Calu3 (cell line): ENCODE measurements at regions of chr3 and their contacts with region 1.

Region 1: DNA sequence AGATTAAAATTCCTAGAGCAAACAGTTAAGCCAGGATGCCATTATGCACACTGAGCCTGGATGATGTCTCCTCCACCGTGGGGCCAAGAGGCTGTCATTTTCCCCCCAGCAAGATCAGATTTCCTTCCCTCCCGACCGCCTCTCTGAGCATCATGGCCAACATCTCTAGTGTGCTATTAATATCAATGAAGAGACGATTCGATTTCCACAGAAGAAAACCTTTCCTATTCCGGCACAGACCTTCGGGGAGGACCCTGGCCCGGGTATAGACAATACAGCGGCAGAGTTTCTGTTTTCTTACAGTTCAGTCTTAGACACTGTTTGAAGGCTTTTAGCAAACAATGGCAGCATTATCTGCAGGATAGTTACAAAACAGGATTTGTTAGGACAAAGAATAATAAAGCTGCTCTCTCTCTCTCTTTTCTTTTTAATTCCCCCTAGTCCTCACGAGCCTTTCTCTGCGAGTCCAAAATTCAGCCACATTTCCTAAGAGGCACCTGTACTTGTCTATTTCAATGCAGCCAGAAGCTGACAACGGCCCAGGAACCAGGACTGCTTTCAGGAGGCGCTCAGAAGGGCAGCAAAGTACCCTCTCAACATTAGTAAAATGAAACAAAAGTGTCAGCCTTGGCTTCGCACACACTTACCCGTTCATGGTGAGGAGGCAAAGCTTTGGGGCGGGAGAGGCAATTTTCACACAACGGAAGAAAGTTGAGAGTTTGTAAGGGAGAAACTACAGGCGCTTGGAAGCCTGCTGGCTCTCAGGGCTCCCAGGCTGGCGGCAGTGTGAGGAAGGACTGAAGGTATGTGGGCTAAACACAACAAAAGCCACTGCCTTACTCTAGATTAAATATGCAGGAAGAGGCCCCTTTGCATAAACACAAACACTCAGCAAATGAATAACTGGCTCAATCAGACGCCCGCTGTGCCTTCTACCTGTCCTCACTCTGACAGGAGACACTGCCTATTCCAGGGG is 278.0 kb downstream of the FOXP1 start:
- DNase-seq: peak; percentile 12
- H3K4me3 Mint-ChIP-seq: peak overlapping the region; percentile 70
- H3K27ac Mint-ChIP-seq: peak overlapping the region; percentile 45
- H3K4me1 Mint-ChIP-seq: peaks cover 39% of the 10 kb centered on the region
- H3K27me3 Mint-ChIP-seq: no peaks in the 10 kb centered on the region
- CTCF ChIP-seq: no peak

Region 2: DNA sequence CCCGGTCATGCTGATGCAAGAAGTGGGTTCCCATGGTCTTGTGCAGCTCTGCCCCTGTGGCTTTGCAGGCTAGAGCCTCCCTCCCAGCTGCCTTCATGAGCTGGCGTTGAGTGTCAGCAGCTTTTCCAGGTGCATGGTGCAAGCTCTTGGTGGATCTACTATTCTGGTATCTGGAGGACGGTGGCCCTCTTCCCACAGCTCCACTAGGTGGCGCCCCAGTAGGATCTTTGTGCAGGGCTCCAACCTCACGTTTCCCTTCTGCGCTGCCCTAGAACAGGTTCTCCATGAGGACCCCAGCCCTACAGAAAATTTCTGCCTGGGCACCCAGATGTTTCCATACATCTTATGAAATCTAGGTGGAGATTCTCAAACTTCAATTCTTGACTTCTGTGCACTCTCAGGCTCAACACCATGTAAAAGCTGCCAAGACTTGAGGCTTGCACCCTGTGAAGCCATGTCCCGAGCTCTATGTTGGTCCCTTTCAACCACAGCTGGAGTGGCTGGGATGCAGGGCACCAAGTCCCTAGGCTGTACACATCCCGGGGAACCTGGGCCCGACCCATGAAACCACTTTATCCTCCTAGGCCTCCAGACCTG is 754.7 kb before region 1 on chr3:
- CTCF ChIA-PET with region 1: no interaction called
- intact Hi-C with region 1: loop called (anchors 10 kb)
- DNase-seq: peak; percentile 75
- H3K4me3 Mint-ChIP-seq: no peak overlapping the region
- H3K27ac Mint-ChIP-seq: no peak overlapping the region
- H3K4me1 Mint-ChIP-seq: no peaks in the 10 kb centered on the region
- H3K27me3 Mint-ChIP-seq: no peaks in the 10 kb centered on the region
- CTCF ChIP-seq: peak; percentile 33

Region 3: DNA sequence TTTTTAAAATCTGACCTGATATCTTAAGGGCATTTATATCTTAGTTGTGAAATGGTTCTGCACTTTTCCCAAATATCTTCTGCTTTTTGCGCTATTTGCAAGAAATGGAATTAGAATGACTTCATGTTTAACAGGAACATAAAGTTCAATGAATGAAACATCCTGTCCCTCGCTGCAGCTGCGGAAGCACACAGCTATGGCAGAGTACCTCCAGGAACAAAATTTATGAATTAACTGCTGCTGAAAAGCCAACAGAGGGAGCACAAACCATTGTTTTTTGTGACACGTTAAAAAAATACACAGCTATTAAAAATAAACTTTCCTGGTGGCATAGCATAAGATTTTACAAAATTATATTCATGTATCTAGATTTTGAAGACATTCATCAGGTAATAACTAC is 588.7 kb before region 1 on chr3:
- CTCF ChIA-PET with region 1: no interaction called
- intact Hi-C with region 1: loop called (anchors 10 kb)
- DNase-seq: no peak
- H3K4me3 Mint-ChIP-seq: no peak overlapping the region
- H3K27ac Mint-ChIP-seq: no peak overlapping the region
- H3K4me1 Mint-ChIP-seq: no peaks in the 10 kb centered on the region
- H3K27me3 Mint-ChIP-seq: no peaks in the 10 kb centered on the region
- CTCF ChIP-seq: no peak

Region 4: DNA sequence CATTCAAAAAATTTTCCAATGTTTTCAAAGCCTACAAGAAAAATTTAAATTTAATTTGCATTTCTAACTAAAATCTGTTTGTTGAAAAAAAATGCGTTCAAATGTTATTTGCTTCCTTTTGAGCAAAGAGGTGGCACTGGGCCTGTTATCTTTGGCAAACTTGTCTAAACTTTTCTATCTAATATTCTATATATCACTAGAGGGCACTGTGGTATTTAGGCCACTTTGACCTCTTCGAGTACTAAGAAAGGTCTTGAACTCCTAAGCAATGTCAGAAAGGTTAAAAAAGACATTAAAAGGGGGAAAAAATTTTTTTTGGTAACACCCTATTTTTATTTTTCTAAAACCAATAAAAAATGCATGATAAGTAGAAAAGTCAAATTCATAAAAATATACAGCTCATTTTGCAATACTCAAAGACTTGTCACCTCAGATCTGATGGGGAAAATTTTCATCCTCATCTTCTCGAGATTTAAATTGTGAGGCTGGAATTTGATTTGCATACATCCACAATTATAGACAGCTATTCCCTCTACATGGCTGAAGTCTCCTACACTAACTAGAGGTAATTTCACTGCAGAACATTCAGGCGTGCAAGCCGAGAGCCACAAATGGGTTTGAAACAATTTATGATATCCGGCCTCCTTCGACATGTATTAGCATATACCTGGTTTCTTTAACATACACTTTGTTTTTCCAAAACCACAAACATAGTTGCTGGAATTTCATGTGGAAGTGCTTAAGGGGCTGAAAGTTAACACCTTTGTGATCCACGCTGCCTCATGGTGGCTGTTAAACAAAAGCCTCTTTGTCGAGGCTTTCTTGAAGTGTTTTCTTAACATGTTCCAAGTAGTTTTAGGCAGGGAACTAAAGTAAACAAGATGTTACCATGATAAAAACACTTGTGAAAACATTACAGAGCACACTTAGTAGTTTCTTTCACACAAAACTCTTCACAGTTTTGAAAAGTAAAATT is 298.4 kb before region 1 on chr3:
- CTCF ChIA-PET with region 1: no interaction called
- intact Hi-C with region 1: loop called (anchors 2 kb)
- DNase-seq: peak; percentile 29
- H3K4me3 Mint-ChIP-seq: no peak overlapping the region
- H3K27ac Mint-ChIP-seq: peak overlapping the region; percentile 87
- H3K4me1 Mint-ChIP-seq: peaks cover 23% of the 10 kb centered on the region
- H3K27me3 Mint-ChIP-seq: no peaks in the 10 kb centered on the region
- CTCF ChIP-seq: no peak

Region 5: GRCh38 chr3:71064288-71064955 is 241.1 kb before region 1 on chr3:
- CTCF ChIA-PET with region 1: no interaction called
- intact Hi-C with region 1: loop called (anchors 2 kb)
- DNase-seq: peak; percentile 61
- H3K4me3 Mint-ChIP-seq: no peak overlapping the region
- H3K27ac Mint-ChIP-seq: no peak overlapping the region
- H3K4me1 Mint-ChIP-seq: peaks cover 29% of the 10 kb centered on the region
- H3K27me3 Mint-ChIP-seq: no peaks in the 10 kb centered on the region
- CTCF ChIP-seq: no peak

Region 6: DNA sequence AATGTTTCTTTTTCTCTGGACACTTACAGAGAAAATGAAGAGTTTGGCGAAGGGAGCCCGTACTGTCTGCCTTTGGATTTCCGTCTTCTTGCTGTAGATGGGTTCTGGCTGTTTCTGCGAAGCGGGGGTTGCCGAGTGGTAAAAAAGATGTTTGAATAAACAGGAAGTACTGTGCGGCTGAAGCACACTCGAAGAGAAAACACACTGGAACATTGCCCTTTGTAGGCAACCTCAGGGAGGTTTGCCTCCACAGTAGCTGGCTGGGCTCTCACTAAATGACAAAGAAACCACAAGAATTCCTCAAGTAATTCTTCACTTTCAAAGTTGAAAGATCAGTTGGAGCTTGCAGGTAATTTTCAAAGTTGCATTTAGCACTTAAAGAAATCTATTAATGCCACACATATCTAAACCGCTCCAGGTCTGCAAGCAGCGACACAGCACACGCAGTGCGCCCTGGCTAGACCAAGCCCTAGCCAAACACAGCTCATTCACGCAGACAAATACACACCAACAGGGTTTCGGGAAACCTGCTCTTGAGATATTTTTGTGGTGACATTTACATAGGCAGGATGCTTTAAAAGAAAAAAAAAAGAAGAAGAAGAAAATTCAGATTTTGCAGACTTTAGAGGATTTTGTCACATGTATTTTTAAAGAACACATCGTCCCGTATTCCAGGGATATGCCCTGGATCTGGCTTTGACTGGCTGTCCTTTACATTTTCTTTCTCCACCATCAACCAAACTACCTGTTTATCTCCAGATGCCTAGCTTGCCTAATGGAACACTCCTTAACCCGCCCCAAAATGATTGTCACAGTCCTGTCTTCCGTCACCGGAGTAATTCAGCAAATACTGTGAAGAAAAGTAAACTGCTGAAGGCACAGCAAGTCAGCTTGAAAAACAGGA is 174.8 kb before region 1 on chr3:
- CTCF ChIA-PET with region 1: interaction called, 3 read pairs
- intact Hi-C with region 1: loop called (anchors 1 kb)
- DNase-seq: peak; percentile 45
- H3K4me3 Mint-ChIP-seq: peak overlapping the region; percentile 88
- H3K27ac Mint-ChIP-seq: peak overlapping the region; percentile 89
- H3K4me1 Mint-ChIP-seq: peaks cover 59% of the 10 kb centered on the region
- H3K27me3 Mint-ChIP-seq: no peaks in the 10 kb centered on the region
- CTCF ChIP-seq: no peak

Region 7: DNA sequence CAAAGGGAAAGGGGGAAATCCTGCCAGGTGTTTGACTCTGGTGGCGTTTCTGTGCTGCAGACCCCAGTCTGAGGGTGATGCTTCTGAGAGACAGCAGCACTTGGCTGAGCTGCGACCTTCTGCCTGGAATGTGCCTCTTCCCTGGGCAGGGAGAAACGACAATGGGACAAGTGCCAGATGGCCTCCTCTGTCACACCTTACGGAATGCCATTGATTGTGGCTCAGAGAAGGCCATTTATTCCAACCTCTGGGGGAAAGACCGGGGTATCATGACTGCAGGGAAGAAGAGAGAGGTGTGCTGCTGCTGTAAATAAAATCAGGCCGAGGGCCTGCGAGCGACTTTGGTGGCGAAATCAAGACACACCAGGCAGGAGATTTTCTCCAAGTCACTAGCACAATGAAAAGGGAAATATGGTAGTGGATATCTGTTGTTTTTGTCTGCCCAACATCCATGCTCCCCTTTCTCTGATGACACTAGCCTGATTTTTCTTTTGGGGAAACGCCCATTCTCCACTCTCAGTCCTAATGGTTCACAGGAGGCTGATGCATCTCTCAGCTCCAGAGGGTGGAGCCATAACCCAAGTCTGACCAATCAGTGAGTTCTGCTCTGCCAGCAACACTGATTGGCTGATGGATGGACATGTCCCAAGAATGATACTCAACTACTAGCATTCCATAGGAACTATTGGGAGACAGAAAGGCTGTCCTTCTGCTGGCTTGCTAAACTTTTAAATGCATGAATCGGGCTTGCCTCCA is 58.1 kb before region 1 on chr3:
- CTCF ChIA-PET with region 1: no interaction called
- intact Hi-C with region 1: loop called (anchors 5 kb)
- DNase-seq: peak; percentile 58
- H3K4me3 Mint-ChIP-seq: peak overlapping the region; percentile 56
- H3K27ac Mint-ChIP-seq: peak overlapping the region; percentile 89
- H3K4me1 Mint-ChIP-seq: peaks cover 55% of the 10 kb centered on the region
- H3K27me3 Mint-ChIP-seq: no peaks in the 10 kb centered on the region
- CTCF ChIP-seq: no peak